ENCODE measurements at regions of chr3 and their contacts with region 1.

Region 1: GRCh38 chr3:138068579-138069174 is 46.7 kb downstream of the DZIP1L start:
- DNase-seq: peak; percentile 54 to 61 (median 59)
- H3K4me3 ChIP-seq: no peak overlapping the region
- H3K4me3 Mint-ChIP-seq: no peak overlapping the region
- H3K27ac ChIP-seq: no peak overlapping the region
- H3K27ac Mint-ChIP-seq: no peak overlapping the region
- H3K4me1 ChIP-seq: no peaks in the 10 kb centered on the region
- H3K4me1 Mint-ChIP-seq: no peaks in the 10 kb centered on the region
- H3K27me3 ChIP-seq: no peaks in the 10 kb centered on the region
- H3K27me3 Mint-ChIP-seq: peaks cover 7 to 16% of the 10 kb centered on the region in 2 donors

Region 2: GRCh38 chr3:137978311-137978710 is 90.4 kb before region 1 on chr3:
- CTCF ChIA-PET with region 1: no interaction called
- POLR2A ChIA-PET with region 1: no interaction called
- intact Hi-C with region 1: no loop called
- DNase-seq: no peak
- H3K4me3 ChIP-seq: no peak overlapping the region
- H3K4me3 Mint-ChIP-seq: no peak overlapping the region
- H3K27ac ChIP-seq: no peak overlapping the region
- H3K27ac Mint-ChIP-seq: no peak overlapping the region
- H3K4me1 ChIP-seq: no peaks in the 10 kb centered on the region
- H3K4me1 Mint-ChIP-seq: no peaks in the 10 kb centered on the region
- H3K27me3 ChIP-seq: no peaks in the 10 kb centered on the region
- H3K27me3 Mint-ChIP-seq: peaks cover 5 to 8% of the 10 kb centered on the region in 2 donors

Region 3: GRCh38 chr3:138023754-138024153 is 44.9 kb before region 1 on chr3:
- CTCF ChIA-PET with region 1: no interaction called
- POLR2A ChIA-PET with region 1: no interaction called
- intact Hi-C with region 1: no loop called
- DNase-seq: no peak
- H3K4me3 ChIP-seq: no peak overlapping the region
- H3K4me3 Mint-ChIP-seq: no peak overlapping the region
- H3K27ac ChIP-seq: no peak overlapping the region
- H3K27ac Mint-ChIP-seq: no peak overlapping the region
- H3K4me1 ChIP-seq: no peaks in the 10 kb centered on the region
- H3K4me1 Mint-ChIP-seq: no peaks in the 10 kb centered on the region
- H3K27me3 ChIP-seq: no peaks in the 10 kb centered on the region
- H3K27me3 Mint-ChIP-seq: peaks cover 4 to 6% of the 10 kb centered on the region in 2 donors

Region 4: GRCh38 chr3:138082085-138082991 is 13.7 kb after region 1 on chr3:
- CTCF ChIA-PET with region 1: interaction called, 13 read pairs
- POLR2A ChIA-PET with region 1: no interaction called
- intact Hi-C with region 1: no loop called
- DNase-seq: peak in 4 of 5 donors; percentile 4 to 16 (median 12)
- H3K4me3 ChIP-seq: no peak overlapping the region
- H3K4me3 Mint-ChIP-seq: peak overlapping the region in 7 of 8 donors; percentile 34 to 65 (median 58)
- H3K27ac ChIP-seq: no peak overlapping the region
- H3K27ac Mint-ChIP-seq: peak overlapping the region in 5 of 7 donors; percentile 29 to 75 (median 65)
- H3K4me1 ChIP-seq: peaks cover 15% of the 10 kb centered on the region
- H3K4me1 Mint-ChIP-seq: peaks cover 2 to 26% (median 14%) of the 10 kb centered on the region in 4 donors
- H3K27me3 ChIP-seq: no peaks in the 10 kb centered on the region
- H3K27me3 Mint-ChIP-seq: peaks cover 5 to 8% of the 10 kb centered on the region in 2 donors

Region 5: DNA sequence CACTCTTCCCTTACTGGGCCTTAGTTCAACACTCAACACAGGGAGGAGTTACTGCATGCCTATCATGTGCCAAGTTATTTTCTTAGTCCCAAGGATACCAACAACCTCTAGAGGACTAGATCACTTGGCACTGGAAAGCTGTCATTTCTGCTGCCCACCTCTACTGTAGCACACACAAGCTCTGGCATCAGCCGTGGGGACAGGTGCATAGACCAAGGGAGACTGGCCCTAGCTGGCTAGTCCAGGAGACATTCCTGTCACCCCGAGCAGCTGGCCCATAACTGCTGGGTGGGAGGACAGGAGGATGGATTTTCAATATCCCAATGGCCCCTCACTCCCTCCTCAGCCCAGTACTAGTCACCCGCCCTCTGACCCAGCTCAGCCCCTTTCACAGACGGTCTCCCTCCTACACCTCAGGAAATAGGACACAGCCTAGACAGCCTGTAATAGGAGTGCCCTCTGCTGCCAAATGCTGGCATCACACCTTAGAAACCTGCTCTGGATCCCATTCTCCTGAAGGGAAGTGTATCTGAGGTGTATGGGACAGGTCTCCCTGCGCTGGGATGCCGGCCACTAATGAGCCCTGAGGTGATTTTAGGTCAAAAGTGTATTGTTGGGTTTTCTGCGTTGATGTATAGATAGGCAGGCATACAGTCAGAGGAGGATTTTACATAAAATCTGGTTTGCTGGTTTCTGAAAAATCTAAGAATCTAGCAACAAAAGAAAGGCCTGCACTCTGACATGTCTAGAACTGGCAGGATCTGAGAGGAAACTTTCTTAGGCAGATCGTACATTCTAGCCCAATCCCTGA is 50.1 kb after region 1 on chr3:
- CTCF ChIA-PET with region 1: interaction called, 114 read pairs
- POLR2A ChIA-PET with region 1: no interaction called
- intact Hi-C with region 1: no loop called
- DNase-seq: peak in 4 of 5 donors; percentile 25 to 37 (median 29)
- H3K4me3 ChIP-seq: no peak overlapping the region
- H3K4me3 Mint-ChIP-seq: no peak overlapping the region
- H3K27ac ChIP-seq: no peak overlapping the region
- H3K27ac Mint-ChIP-seq: no peak overlapping the region
- H3K4me1 ChIP-seq: no peaks in the 10 kb centered on the region
- H3K4me1 Mint-ChIP-seq: peaks cover 0 to 8% (median 3%) of the 10 kb centered on the region in 4 donors
- H3K27me3 ChIP-seq: peaks cover 10% of the 10 kb centered on the region
- H3K27me3 Mint-ChIP-seq: peaks cover 14 to 34% of the 10 kb centered on the region in 2 donors

Measured in CD4-positive, alpha-beta memory T cell (primary cell).